CD4-positive, alpha-beta memory T cell (primary cell): ENCODE measurements at regions of chr2 and their contacts with region 1.

Region 1: DNA sequence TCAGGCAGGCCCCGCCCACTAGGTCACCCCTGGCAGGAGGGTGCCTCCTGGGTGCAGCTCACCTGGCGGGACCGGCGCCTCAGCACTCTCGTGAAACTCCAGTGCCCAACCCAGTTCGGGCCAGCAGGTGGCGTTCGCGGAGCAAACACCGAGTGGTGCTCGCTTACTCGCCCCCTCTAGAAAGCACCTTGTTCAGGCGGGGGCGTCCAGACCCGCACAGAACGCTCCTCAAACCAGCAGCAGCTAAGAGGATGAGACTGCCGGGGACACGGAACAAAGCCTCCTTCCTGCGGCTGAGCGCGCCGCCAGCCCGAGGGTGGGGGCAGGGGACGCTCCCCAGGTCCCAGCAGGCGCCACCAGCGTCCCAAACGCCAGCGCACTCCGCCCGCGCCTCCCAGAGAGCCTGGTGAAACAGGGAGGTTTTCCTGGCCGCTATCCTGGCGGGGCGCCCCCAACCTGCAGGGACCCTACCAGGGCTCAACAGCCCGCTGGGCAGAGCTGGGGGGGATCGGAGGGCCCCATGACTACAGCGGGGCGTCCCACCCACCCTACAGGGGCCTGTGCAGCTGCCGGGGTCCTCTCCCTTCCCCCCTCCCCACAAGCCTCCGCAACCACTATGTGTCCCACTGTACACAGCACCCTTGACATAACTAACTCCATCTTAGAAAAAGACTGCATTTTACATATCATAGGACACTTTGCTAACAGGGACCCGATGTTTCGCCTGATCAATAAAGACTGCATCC is 44.7 kb downstream of the MRPS5 start:
- DNase-seq: peak; percentile 85 to 91 (median 87)
- H3K4me3 ChIP-seq: peak overlapping the region; percentile 42 to 54
- H3K4me3 Mint-ChIP-seq: peak overlapping the region; percentile 78 to 90 (median 84)
- H3K27ac ChIP-seq: peak overlapping the region; percentile 56
- H3K27ac Mint-ChIP-seq: peak overlapping the region; percentile 89 to 94 (median 90)
- H3K4me1 ChIP-seq: peaks cover 72% of the 10 kb centered on the region
- H3K4me1 Mint-ChIP-seq: peaks cover 39 to 76% (median 66%) of the 10 kb centered on the region in 4 donors
- H3K27me3 ChIP-seq: no peaks in the 10 kb centered on the region
- H3K27me3 Mint-ChIP-seq: no peaks in the 10 kb centered on the region

Region 2: DNA sequence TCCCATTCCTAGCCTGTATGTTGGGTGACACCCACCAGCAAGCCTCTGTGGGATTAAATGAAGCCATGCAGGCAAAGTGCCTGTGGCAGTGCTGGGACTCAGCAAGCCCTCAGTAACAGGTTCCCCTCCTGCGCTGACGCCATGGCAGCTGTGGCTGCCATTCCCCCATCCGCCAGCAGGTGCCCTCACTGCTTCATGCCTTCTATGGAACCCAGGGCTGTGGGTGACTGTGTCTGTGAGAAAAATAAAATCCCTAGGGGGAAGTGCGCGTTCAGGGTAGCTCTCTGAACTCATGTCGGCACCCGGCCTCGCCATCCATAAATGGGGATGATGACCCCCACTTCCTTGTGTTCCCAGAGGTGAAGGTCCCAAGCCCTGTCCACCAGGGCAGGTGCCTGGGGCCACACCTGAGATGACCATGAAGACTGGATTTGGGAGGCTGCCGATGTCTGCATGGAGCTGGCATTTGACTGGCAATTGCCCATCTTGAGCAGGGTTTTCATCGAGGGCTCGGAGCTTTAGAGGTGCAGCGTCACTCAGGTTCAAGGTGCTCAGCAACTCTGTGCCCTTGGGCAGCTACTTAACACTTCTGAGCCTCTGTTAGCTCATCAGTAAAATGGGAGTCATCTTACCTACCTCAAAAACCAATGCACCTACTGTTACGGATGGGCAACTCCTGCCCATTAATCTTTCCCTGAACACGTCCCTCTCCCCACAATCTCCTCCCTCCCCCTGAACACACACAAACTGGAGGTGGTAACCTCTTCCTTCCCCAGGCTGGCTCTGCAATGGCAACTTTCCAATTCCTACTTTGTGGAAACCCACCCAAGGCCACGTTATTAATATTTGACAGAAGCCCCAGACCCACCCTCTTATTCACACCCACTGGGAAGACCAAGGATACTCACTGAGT is 54.4 kb before region 1 on chr2:
- CTCF ChIA-PET with region 1: interaction called, 765 read pairs
- POLR2A ChIA-PET with region 1: interaction called, 647 read pairs
- intact Hi-C with region 1: loop called (anchors 1 kb)
- DNase-seq: peak; percentile 76 to 80 (median 79)
- H3K4me3 ChIP-seq: no peak overlapping the region
- H3K4me3 Mint-ChIP-seq: peak overlapping the region; percentile 57 to 95 (median 74)
- H3K27ac ChIP-seq: peak overlapping the region; percentile 27
- H3K27ac Mint-ChIP-seq: peak overlapping the region; percentile 72 to 98 (median 88)
- H3K4me1 ChIP-seq: peaks cover 47% of the 10 kb centered on the region
- H3K4me1 Mint-ChIP-seq: peaks cover 24 to 59% (median 42%) of the 10 kb centered on the region in 4 donors
- H3K27me3 ChIP-seq: no peaks in the 10 kb centered on the region
- H3K27me3 Mint-ChIP-seq: no peaks in the 10 kb centered on the region

Region 3: GRCh38 chr2:95053543-95053942 is 23.4 kb before region 1 on chr2:
- CTCF ChIA-PET with region 1: interaction called, 65 read pairs
- POLR2A ChIA-PET with region 1: interaction called, 225 read pairs
- intact Hi-C with region 1: loop called (anchors 2 kb)
- DNase-seq: no peak
- H3K4me3 ChIP-seq: no peak overlapping the region
- H3K4me3 Mint-ChIP-seq: peak overlapping the region in 2 of 8 donors; percentile 4 to 22
- H3K27ac ChIP-seq: no peak overlapping the region
- H3K27ac Mint-ChIP-seq: peak overlapping the region; percentile 22 to 87 (median 66)
- H3K4me1 ChIP-seq: peaks cover 42% of the 10 kb centered on the region
- H3K4me1 Mint-ChIP-seq: peaks cover 25 to 70% (median 45%) of the 10 kb centered on the region in 4 donors
- H3K27me3 ChIP-seq: no peaks in the 10 kb centered on the region
- H3K27me3 Mint-ChIP-seq: no peaks in the 10 kb centered on the region

Region 4: GRCh38 chr2:95106081-95106480 is 29.1 kb after region 1 on chr2:
- CTCF ChIA-PET with region 1: interaction called, 10 read pairs
- POLR2A ChIA-PET with region 1: no interaction called
- intact Hi-C with region 1: no loop called
- DNase-seq: no peak
- H3K4me3 ChIP-seq: no peak overlapping the region
- H3K4me3 Mint-ChIP-seq: no peak overlapping the region
- H3K27ac ChIP-seq: no peak overlapping the region
- H3K27ac Mint-ChIP-seq: peak overlapping the region in 4 of 7 donors; percentile 29 to 64 (median 49)
- H3K4me1 ChIP-seq: no peaks in the 10 kb centered on the region
- H3K4me1 Mint-ChIP-seq: peaks cover 0 to 6% (median 2%) of the 10 kb centered on the region in 4 donors
- H3K27me3 ChIP-seq: no peaks in the 10 kb centered on the region
- H3K27me3 Mint-ChIP-seq: no peaks in the 10 kb centered on the region

Region 5: GRCh38 chr2:95159690-95160449 is 82.9 kb after region 1 on chr2 and contains the start of gene ZNF514:
- CTCF ChIA-PET with region 1: interaction called, 17 read pairs
- POLR2A ChIA-PET with region 1: interaction called, 11 read pairs
- intact Hi-C with region 1: no loop called
- DNase-seq: peak; percentile 70 to 82 (median 74)
- H3K4me3 ChIP-seq: peak within 1 kb of the TSS; percentile 32 to 74
- H3K4me3 Mint-ChIP-seq: peak within 1 kb of the TSS; percentile 86 to 94 (median 90)
- H3K27ac ChIP-seq: peak within 1 kb of the TSS; percentile 57
- H3K27ac Mint-ChIP-seq: peak within 1 kb of the TSS; percentile 77 to 95 (median 89)
- H3K4me1 ChIP-seq: peaks cover 24% of the 10 kb centered on the region
- H3K4me1 Mint-ChIP-seq: peaks cover 5 to 35% (median 13%) of the 10 kb centered on the region in 4 donors
- H3K27me3 ChIP-seq: no peaks in the 10 kb centered on the region
- H3K27me3 Mint-ChIP-seq: no peaks in the 10 kb centered on the region
- total RNA-seq, gene ZNF514: 35.2 to 37.1 TPM

Region 6: DNA sequence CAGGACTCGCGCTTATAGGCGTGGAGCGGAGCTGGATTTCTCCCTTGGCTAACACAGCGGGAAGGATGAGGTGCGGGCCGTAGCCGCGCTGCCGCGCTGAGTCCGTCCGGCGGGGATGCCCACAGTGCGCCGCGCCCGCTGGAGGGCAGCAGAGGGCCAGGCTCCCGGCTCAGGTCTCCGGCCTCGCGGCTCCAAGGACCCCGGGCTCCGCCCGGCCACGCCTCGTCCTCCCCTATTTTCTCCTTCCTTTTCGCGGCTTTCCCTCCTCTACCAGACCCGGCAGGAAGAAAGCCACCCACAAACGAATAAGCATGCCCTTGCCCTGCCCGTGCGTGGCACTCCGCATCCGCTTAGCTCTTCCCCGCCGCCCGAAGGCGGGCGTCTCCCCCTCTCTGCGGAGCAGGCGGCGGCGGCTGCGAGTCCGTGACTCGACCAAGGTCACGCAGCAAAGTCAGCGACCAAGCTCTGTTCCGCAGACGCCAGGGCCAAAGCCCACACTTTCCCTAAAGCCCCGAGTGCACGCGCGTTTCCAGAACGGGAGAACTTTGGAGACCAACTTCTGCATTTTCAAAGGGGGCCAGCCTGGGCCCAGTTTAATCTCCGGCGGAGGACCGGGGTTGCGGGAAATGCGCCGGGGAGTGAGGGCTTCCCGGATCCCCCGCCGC is 268.7 kb after region 1 on chr2:
- CTCF ChIA-PET with region 1: no interaction called
- POLR2A ChIA-PET with region 1: no interaction called
- intact Hi-C with region 1: no loop called
- DNase-seq: peak in 4 of 5 donors; percentile 15 to 36 (median 30)
- H3K4me3 ChIP-seq: peak overlapping the region in 1 of 2 donors; percentile 37
- H3K4me3 Mint-ChIP-seq: peak overlapping the region; percentile 71 to 85 (median 76)
- H3K27ac ChIP-seq: no peak overlapping the region
- H3K27ac Mint-ChIP-seq: no peak overlapping the region
- H3K4me1 ChIP-seq: peaks cover 10% of the 10 kb centered on the region
- H3K4me1 Mint-ChIP-seq: peaks cover 0 to 11% (median 3%) of the 10 kb centered on the region in 4 donors
- H3K27me3 ChIP-seq: peaks cover 4% of the 10 kb centered on the region
- H3K27me3 Mint-ChIP-seq: peaks cover 30% of the 10 kb centered on the region in 2 donors

Region 7: GRCh38 chr2:95402370-95403203 is 325.6 kb after region 1 on chr2 and contains the start of gene FAHD2A:
- CTCF ChIA-PET with region 1: no interaction called
- POLR2A ChIA-PET with region 1: no interaction called
- intact Hi-C with region 1: loop called (anchors 5 kb)
- DNase-seq: peak; percentile 89 to 93 (median 91)
- H3K4me3 ChIP-seq: peak within 1 kb of the TSS; percentile 93
- H3K4me3 Mint-ChIP-seq: peak within 1 kb of the TSS; percentile 97 to 99 (median 98)
- H3K27ac ChIP-seq: peak within 1 kb of the TSS; percentile 79
- H3K27ac Mint-ChIP-seq: peak within 1 kb of the TSS; percentile 90 to 97 (median 95)
- H3K4me1 ChIP-seq: peaks cover 17% of the 10 kb centered on the region
- H3K4me1 Mint-ChIP-seq: peaks cover 7 to 33% (median 20%) of the 10 kb centered on the region in 4 donors
- H3K27me3 ChIP-seq: no peaks in the 10 kb centered on the region
- H3K27me3 Mint-ChIP-seq: no peaks in the 10 kb centered on the region
- total RNA-seq, gene FAHD2A: 30.7 to 33.9 TPM